ENCODE measurements at regions of chr7 and their contacts with region 1.

Region 1: DNA sequence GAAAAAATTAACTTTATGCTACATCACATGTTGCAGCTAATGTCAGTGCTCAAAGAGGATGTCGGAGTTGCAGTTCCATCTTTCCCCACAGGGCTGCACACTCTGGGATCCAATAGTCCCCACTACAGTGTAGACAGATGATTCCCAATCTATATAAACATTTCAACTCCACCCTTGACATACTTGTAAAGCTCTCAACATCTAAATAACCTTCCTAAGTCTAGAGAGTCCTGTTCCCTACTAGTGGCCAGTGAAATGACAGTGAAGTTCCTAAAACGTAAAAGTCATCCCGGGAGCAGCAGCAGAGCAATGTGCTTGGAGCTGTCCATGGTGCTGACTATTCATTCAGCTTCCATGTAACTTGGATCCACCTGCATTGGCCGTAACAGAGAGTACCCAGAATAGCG is 145.1 kb downstream of the GRM8 start:
- DNase-seq: peak; percentile 62 to 76
- H3K4me3 ChIP-seq: no peak overlapping the region
- H3K4me3 Mint-ChIP-seq: no peak overlapping the region
- H3K27ac Mint-ChIP-seq: no peak overlapping the region
- H3K4me1 ChIP-seq: no peaks in the 10 kb centered on the region
- H3K4me1 Mint-ChIP-seq: no peaks in the 10 kb centered on the region
- H3K27me3 ChIP-seq: no peaks in the 10 kb centered on the region
- H3K27me3 Mint-ChIP-seq: peaks cover 6% of the 10 kb centered on the region
- CTCF ChIP-seq: peak; percentile 33 to 75

Region 2: DNA sequence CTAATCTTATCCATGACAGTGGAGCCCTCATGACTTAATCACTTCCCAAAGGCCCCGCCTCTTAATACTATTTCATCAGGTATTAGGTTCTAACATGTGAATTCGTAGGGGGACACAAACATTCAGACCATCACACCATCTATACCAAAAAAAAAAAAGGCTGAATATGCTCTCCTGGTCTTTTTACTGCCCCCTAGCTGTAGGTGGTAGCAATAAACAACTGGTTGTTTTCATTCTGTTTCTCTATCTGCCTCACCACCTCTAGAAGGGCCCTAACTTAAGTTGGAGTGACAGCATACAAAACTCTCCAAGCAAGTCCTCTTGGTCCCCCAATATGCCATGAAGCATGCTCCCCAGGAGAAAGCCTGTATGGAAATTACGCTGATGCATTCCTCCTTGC is 51.1 kb after region 1 on chr7:
- CTCF ChIA-PET with region 1: no interaction called
- POLR2A ChIA-PET with region 1: no interaction called
- intact Hi-C with region 1: loop called (anchors 1 kb)
- DNase-seq: no peak
- H3K4me3 ChIP-seq: no peak overlapping the region
- H3K4me3 Mint-ChIP-seq: no peak overlapping the region
- H3K27ac Mint-ChIP-seq: no peak overlapping the region
- H3K4me1 ChIP-seq: no peaks in the 10 kb centered on the region
- H3K4me1 Mint-ChIP-seq: no peaks in the 10 kb centered on the region
- H3K27me3 ChIP-seq: no peaks in the 10 kb centered on the region; the same call in 1 of the 2 replicates
- H3K27me3 Mint-ChIP-seq: peaks cover 14% of the 10 kb centered on the region
- CTCF ChIP-seq: peak; percentile 13 to 19